ENCODE measurements at regions of chr15 and their contacts with region 1.

Region 1: GRCh38 chr15:79978655-79979514 is 7.9 kb upstream of the BCL2A1 start:
- DNase-seq: peak; percentile 28
- ATAC-seq: peak; percentile 64
- H3K4me3 Mint-ChIP-seq: peak overlapping the region; percentile 83
- H3K27ac Mint-ChIP-seq: peak overlapping the region; percentile 94
- H3K4me1 Mint-ChIP-seq: peaks cover 78% of the 10 kb centered on the region
- H3K27me3 Mint-ChIP-seq: no peaks in the 10 kb centered on the region
- CTCF ChIP-seq: no peak

Region 2: DNA sequence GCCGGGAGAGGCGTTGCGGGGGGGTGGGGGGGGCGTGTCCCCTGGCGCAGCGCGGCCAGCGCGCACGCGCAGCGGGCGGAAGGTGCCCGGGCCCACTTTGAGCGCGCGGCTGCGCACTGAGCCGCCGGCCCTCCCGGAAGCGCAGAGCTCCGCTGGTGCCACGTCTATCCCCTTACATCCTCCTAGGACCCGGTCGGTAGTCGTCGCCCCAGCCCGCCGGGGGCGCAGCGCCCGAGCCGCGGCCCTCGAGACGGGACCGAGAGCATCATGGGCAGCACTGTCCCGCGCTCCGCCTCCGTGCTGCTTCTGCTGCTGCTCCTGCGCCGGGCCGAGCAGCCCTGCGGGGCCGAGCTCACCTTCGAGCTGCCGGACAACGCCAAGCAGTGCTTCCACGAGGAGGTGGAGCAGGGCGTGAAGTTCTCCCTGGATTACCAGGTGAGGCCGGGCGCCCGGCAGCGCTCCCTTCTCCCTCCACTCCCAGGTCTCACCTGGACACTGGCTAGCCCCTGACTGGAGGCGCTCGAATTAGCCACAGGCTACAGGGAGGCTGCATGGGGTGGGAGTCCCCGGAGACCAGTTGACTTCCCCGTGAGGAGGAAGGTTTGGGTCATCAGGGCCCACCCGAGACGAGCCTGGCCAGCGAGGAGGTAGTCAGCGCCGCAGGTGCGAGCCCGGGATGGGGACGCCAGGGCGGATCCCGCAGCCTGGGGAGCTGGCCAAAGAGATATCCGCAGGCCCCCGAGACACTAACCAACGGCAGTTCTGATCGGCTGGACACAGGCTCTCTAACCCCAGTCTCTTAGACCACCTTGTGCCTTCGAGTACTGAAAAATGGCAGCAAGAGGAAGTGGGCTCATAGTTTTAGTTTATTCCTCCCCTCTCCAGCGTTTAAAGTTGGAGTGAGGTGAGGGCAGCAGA is 667.6 kb before region 1 on chr15 and contains the start of gene TMED3:
- CTCF ChIA-PET with region 1: no interaction called
- POLR2A ChIA-PET with region 1: no interaction called
- intact Hi-C with region 1: loop called (anchors 2 kb)
- DNase-seq: peak; percentile 80
- ATAC-seq: peak; percentile 94
- H3K4me3 Mint-ChIP-seq: peak within 1 kb of the TSS; percentile 84
- H3K27ac Mint-ChIP-seq: peak within 1 kb of the TSS; percentile 68
- H3K4me1 Mint-ChIP-seq: peaks cover 29% of the 10 kb centered on the region
- H3K27me3 Mint-ChIP-seq: peaks cover 2% of the 10 kb centered on the region
- CTCF ChIP-seq: no peak
- total RNA-seq, gene TMED3: 24.7 and 25.0 TPM in 2 replicates

Region 3: DNA sequence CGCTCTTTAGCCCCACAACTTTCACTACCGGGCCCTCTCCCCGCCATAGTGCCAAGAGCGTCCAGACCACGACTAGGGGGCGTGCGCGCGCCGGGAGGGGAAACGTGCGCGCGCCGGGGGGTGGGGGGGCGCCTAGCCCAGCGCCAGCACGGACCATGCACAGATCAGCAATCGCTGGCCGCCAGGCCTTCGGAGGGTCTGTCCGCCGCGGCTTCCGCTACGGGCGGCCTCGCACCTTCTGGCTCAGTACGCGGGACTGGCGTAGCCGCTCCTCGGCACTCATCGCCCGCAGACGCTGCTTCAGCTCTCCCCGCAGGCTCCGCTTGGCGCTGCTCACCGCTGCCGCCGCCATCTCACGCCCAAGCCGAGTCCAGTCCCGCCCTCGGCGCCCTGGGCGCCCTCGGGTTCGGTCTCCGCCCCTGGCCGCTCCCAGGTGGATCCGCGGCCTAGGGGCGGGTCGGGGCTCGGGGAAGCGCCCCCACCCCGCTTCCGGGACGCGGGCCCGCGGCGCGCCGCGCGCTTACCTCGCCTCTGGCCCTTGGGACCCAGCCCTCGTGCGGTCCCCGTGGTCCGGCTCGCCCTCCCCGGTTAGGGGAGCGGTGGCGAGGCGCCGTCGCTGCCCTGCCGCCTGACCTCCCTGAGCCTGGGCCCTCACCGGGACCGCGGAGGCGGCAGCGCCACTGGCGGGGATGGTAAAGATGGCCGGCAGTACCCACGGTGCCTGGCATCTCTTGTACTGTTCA is 82.1 kb before region 1 on chr15 and contains the start of gene MTHFS:
- CTCF ChIA-PET with region 1: interaction called, 4 read pairs
- POLR2A ChIA-PET with region 1: interaction called, 24 read pairs
- intact Hi-C with region 1: loop called (anchors 1 kb)
- DNase-seq: peak; percentile 76
- ATAC-seq: peak; percentile 87
- H3K4me3 Mint-ChIP-seq: peak within 1 kb of the TSS; percentile 99
- H3K27ac Mint-ChIP-seq: peak within 1 kb of the TSS; percentile 100
- H3K4me1 Mint-ChIP-seq: peaks cover 54% of the 10 kb centered on the region
- H3K27me3 Mint-ChIP-seq: no peaks in the 10 kb centered on the region
- CTCF ChIP-seq: no peak
- total RNA-seq, gene MTHFS: 28.6 and 29.5 TPM in 2 replicates

Region 4: GRCh38 chr15:79962178-79962577 is 16.7 kb before region 1 on chr15:
- CTCF ChIA-PET with region 1: interaction called, 5 read pairs
- POLR2A ChIA-PET with region 1: interaction called, 65 read pairs
- intact Hi-C with region 1: loop called (anchors 1 kb)
- DNase-seq: no peak
- ATAC-seq: peak; percentile 78
- H3K4me3 Mint-ChIP-seq: peak overlapping the region; percentile 36
- H3K27ac Mint-ChIP-seq: peak overlapping the region; percentile 71
- H3K4me1 Mint-ChIP-seq: peaks cover 60% of the 10 kb centered on the region
- H3K27me3 Mint-ChIP-seq: no peaks in the 10 kb centered on the region
- CTCF ChIP-seq: no peak

Region 5: DNA sequence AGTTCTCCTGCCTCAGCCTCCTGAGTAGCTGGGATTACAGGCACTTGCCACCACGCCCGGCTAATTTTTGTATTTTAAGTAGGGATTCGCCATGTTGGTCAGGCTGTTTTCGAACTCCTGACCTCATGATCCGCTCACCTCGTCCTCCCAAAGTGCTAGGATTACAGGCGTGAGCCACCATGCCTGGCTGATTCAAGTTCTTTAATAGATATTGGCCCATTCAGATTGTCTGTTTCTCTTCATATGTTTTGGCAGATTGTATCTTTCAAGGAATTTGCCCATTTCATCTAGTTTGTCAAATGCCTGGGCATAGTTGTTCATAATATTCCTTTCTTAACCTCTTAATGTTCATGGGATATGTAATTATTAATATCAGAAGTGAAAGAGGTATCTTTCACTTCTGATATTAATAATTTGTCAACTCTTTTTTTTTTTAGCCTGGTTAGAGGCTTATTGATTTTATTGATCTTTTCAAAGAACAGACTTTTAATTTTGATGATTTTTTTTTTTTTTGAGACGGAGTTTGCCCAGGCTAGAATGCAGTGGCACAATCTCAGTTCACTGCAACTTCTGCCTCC is 40.4 kb after region 1 on chr15:
- CTCF ChIA-PET with region 1: no interaction called
- POLR2A ChIA-PET with region 1: interaction called, 19 read pairs
- intact Hi-C with region 1: no loop called
- DNase-seq: no peak
- ATAC-seq: no peak
- H3K4me3 Mint-ChIP-seq: peak overlapping the region; percentile 87
- H3K27ac Mint-ChIP-seq: peak overlapping the region; percentile 98
- H3K4me1 Mint-ChIP-seq: peaks cover 73% of the 10 kb centered on the region
- H3K27me3 Mint-ChIP-seq: no peaks in the 10 kb centered on the region
- CTCF ChIP-seq: no peak

Measured in activated B cell treated with CpG ODN at 0.5 μM for 24 hours (primary cell).